Sigmoid colon (tissue), 7 donors: ENCODE measurements at regions of chrX and their contacts with region 1.

Region 1: DNA sequence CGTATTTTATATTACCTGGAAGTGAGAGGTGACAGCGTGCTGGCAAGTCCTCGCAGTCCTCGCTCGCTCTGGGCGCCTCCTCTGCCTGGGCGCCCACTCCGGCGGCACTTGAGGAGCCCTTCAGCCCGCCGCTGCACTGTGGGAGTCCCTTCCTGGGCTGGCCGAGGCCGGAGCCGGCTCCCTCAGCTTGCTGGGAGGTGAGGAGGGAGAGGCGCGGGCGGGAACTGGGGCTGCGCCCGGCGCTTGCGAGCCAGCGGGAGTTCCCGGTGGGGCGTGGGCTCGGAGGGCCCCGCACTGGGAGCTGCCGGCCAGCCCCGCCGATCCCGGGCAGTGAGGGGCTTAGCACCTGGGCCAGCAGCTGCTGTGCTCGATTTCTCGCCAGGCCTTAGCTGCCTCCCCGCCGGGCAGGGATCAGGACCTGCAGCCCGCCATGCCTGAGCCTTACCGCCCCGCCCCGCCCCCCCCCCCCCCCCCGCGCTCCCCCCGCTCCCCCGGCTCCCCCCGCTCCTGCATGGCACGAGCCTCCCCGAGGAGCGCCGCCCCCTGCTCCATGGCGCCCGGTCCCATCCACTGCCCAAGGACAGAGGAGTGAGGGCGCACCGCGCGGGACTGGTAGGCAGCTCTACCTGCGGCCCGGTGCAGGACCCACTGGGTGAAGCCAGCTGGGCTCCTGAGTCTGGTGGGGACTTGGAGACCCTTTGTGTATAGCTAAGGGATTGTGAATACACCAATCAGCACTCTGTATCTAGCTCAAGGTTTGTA is 298.9 kb upstream of the MAGEB16 start:
- DNase-seq: no peak
- H3K4me3 ChIP-seq: no peak overlapping the region
- H3K27ac ChIP-seq: no peak overlapping the region
- H3K4me1 ChIP-seq: no peaks in the 10 kb centered on the region
- H3K27me3 ChIP-seq: no peaks in the 10 kb centered on the region
- CTCF ChIP-seq: no peak
- EP300 ChIP-seq: no peak
- POLR2A ChIP-seq: no peak

Region 2: DNA sequence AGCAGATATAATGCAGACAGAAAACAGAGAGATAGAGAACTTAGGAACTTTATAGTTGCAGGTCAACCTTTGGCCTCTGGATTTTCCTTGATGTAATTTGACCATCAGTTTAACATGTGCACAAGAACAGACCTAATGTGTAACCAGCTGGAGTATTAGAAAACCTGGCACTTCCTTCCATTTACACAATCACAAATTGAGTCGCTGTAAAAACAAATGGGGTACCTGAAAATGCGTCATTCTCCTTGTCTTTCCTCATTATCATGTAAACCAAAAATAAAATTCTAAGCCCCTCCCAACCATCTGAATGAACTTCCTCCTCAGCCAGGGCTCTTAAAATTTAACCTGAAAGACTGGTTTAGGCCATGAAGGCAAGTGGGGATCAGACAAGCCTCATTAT is 59.6 kb before region 1 on chrX:
- intact Hi-C with region 1: loop called (anchors 10 kb)
- DNase-seq: no peak
- H3K4me3 ChIP-seq: no peak overlapping the region
- H3K27ac ChIP-seq: no peak overlapping the region
- H3K4me1 ChIP-seq: no peaks in the 10 kb centered on the region
- H3K27me3 ChIP-seq: no peaks in the 10 kb centered on the region
- CTCF ChIP-seq: no peak
- EP300 ChIP-seq: no peak
- POLR2A ChIP-seq: no peak

Region 3: GRCh38 chrX:35809781-35810180 is 310.5 kb after region 1 on chrX:
- intact Hi-C with region 1: no loop called
- DNase-seq: no peak
- H3K4me3 ChIP-seq: no peak overlapping the region
- H3K27ac ChIP-seq: no peak overlapping the region
- H3K4me1 ChIP-seq: no peaks in the 10 kb centered on the region
- H3K27me3 ChIP-seq: no peaks in the 10 kb centered on the region
- CTCF ChIP-seq: no peak
- EP300 ChIP-seq: no peak
- POLR2A ChIP-seq: no peak